ENCODE measurements at regions of chr5 and their contacts with region 1.

Region 1: DNA sequence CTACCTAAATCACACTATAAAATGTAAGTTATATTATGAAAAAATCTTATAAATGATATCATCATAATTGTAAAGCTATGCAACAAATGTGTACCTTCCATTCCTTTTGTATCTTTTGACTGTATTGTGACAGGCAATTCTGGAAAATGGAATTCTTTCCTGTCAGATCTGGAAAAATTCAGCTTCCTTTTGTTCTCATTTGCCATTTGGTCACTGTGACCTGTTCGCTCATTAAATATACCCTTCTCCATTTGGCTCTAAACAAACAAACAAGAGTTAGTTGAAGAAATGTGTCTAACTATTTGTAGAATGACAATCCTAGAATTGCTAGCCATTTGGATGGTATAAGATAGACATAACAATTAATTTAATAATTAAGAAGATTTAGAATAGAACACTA is 62.7 kb downstream of the CDKL3 start:
- H3K4me3 Mint-ChIP-seq: no peak overlapping the region
- H3K27ac Mint-ChIP-seq: no peak overlapping the region
- H3K4me1 Mint-ChIP-seq: no peaks in the 10 kb centered on the region
- H3K27me3 Mint-ChIP-seq: no peaks in the 10 kb centered on the region

Region 2: DNA sequence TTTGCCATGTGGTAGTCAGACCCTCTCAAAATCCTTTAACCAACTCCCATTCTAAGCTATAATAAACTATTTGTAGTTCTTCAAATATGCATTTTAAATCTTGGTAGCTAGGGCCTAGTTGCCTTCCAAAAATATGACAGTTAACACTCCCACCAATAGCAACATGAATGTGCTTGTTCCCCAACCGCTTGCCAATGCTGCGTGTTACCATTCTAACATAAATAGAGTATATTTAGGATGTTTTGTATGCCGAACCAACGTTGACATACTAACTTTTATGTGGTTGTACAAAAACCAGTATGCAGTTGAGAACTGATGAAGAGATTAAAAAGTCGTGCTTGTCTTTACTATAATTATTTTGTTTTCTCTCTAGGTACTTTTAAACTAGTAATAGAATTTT is 76.0 kb after region 1 on chr5:
- intact Hi-C with region 1: loop called (anchors 10 kb)
- H3K4me3 Mint-ChIP-seq: no peak overlapping the region
- H3K27ac Mint-ChIP-seq: no peak overlapping the region
- H3K4me1 Mint-ChIP-seq: peaks cover 4% of the 10 kb centered on the region
- H3K27me3 Mint-ChIP-seq: no peaks in the 10 kb centered on the region

Region 3: GRCh38 chr5:134577796-134578363 is 273.6 kb after region 1 on chr5:
- intact Hi-C with region 1: loop called (anchors 2 kb)
- H3K4me3 Mint-ChIP-seq: no peak overlapping the region
- H3K27ac Mint-ChIP-seq: no peak overlapping the region
- H3K4me1 Mint-ChIP-seq: peaks cover 20% of the 10 kb centered on the region
- H3K27me3 Mint-ChIP-seq: no peaks in the 10 kb centered on the region

Region 4: GRCh38 chr5:134586866-134587524 is 282.7 kb after region 1 on chr5:
- intact Hi-C with region 1: loop called (anchors 1 kb)
- H3K4me3 Mint-ChIP-seq: no peak overlapping the region
- H3K27ac Mint-ChIP-seq: no peak overlapping the region
- H3K4me1 Mint-ChIP-seq: peaks cover 6% of the 10 kb centered on the region
- H3K27me3 Mint-ChIP-seq: no peaks in the 10 kb centered on the region

Measured in dendritic cell treated with granulocyte-macrophage colony-stimulating factor and Interleukin-4, amounts not matched to agents 40 ng/mL and 50 ng/mL, for 4 days (primary cell).